Activated CD4-positive, alpha-beta T cell treated with anti-CD3 and anti-CD28 coated beads, Interleukin-2, amount 10 ng/mL, durations not matched to agents 24 days and 14 days (primary cell): ENCODE measurements at regions of chr9 and their contacts with region 1.

Region 1: GRCh38 chr9:69672596-69673310 is 582 bp upstream of the APBA1 start:
- DNase-seq: peak; percentile 92
- H3K4me3 Mint-ChIP-seq: peak overlapping the region; percentile 86
- H3K27ac Mint-ChIP-seq: peak overlapping the region; percentile 43
- H3K4me1 Mint-ChIP-seq: peaks cover 15% of the 10 kb centered on the region
- H3K27me3 Mint-ChIP-seq: peaks cover 43% of the 10 kb centered on the region

Region 2: GRCh38 chr9:69421908-69422801 is 250.6 kb before region 1 on chr9:
- intact Hi-C with region 1: loop called (anchors 5 kb)
- DNase-seq: peak; percentile 83
- H3K4me3 Mint-ChIP-seq: no peak overlapping the region
- H3K27ac Mint-ChIP-seq: no peak overlapping the region
- H3K4me1 Mint-ChIP-seq: peaks cover 2% of the 10 kb centered on the region
- H3K27me3 Mint-ChIP-seq: peaks cover 9% of the 10 kb centered on the region

Region 3: DNA sequence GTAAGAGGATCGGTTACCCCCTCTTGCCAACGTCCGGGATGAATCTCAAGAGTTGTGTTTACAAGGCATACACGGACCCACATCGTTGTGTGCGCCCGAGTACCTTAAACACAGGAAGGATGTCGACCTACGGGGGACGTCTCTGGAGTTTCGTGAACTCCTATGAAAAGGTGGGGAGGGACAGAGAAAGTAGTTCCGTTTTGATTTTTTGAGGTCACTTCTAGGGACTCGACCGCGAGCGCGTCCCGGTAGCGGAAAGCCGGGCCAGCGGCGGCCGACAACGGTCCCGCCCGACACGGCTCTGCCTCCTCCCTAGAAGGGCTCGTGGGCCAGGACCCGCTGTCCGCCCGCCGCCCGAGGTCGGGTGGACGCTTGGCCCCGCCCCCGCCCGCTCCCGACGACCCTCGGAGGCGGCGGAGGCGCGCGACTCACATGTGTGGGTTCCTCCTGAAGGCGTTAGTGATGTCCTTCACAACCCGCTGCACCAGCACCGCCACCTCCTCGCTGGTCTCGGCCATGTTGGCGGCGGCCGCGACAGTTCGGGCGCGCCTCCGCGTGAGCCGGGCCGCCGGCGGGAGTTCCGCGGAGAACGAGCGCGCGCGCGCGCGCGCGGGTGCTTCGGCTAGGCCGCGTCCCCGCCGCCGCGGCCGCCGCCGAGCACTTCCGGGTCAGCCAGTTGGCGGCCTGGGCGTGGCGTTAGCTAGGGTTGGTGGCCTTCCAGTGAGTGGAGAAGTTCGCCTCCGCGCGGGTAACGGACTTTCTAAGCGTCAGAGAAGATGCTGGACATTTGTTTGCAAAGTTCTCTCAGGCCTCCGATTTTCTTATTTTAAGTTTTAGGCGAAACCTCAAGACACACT is 86.9 kb after region 1 on chr9 and contains the start of gene PTAR1:
- intact Hi-C with region 1: loop called (anchors 1 kb)
- DNase-seq: peak; percentile 97
- H3K4me3 Mint-ChIP-seq: peak within 1 kb of the TSS; percentile 98
- H3K27ac Mint-ChIP-seq: peak within 1 kb of the TSS; percentile 96
- H3K4me1 Mint-ChIP-seq: peaks cover 29% of the 10 kb centered on the region
- H3K27me3 Mint-ChIP-seq: no peaks in the 10 kb centered on the region
- total RNA-seq, gene PTAR1: 51.0 and 56.1 TPM in 2 replicates

Region 4: GRCh38 chr9:69877854-69878514 is 205.2 kb after region 1 on chr9:
- intact Hi-C with region 1: loop called (anchors 1 kb)
- DNase-seq: no peak
- H3K4me3 Mint-ChIP-seq: no peak overlapping the region
- H3K27ac Mint-ChIP-seq: no peak overlapping the region
- H3K4me1 Mint-ChIP-seq: no peaks in the 10 kb centered on the region
- H3K27me3 Mint-ChIP-seq: peaks cover 18% of the 10 kb centered on the region

Region 5: DNA sequence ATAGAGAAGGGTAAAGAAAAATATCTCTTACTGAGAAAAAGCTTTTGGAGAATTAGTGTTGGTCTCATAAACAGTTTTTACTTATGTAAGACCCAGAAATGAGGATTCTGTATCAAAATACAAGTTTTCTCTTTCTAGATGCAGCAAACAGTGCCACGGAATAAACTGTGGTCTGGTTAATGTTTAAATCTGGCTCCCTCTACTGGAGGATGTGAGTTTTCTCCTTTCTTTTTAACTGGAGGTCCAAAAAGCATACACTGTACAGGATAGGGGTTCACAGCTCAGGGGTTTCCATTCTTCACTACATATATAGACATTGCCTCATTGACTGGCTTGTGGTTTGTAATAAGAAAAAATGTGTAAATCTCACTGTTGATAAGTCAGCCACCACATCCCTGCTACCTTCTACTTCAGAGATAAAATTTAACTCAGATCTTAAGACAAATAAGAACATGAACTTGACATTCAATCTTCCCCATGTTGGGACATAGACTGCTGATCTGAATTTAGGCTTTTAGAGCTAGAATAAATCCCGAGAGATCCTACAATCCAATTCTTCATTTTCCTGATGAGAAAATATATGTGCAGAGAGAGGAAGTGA is 246.8 kb after region 1 on chr9:
- intact Hi-C with region 1: loop called (anchors 2 kb)
- DNase-seq: peak; percentile 68
- H3K4me3 Mint-ChIP-seq: no peak overlapping the region
- H3K27ac Mint-ChIP-seq: no peak overlapping the region
- H3K4me1 Mint-ChIP-seq: no peaks in the 10 kb centered on the region
- H3K27me3 Mint-ChIP-seq: peaks cover 18% of the 10 kb centered on the region

Region 6: DNA sequence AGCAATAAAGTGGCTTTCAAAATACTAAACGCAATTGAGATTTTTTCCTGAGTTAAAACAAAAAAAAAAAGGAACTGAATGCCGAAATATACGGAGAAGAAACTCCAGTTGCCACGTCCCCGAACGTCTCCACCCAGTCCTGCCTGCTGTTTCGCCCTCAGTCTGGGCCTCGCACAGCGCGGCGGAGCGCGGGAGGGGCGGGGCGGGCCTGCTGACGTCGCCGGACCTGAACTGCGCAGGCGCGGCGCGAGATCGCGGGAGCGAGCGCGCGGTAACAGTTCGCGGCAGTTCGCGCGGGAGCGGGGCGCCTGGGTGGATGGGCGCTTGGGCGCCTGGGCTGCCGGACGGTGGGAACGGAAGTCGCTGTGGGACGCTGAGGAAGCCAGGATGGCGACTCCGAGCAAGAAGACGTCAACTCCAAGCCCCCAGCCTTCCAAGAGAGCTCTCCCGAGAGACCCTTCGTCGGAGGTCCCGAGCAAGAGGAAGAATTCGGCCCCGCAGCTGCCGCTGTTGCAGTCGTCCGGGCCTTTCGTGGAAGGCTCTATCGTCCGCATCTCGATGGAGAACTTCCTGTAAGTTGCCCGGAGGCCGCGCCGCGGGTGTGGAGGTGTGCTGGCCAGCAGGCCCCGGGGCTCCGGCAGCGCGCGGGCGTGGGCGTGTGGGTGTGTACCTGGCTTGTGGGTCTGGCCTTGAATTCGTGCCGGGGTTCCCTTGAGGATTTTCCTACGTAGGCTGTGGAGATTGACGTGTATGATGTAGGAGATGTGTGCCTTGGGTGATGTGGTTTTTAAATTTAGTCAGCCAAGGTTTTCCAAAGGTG is 586.1 kb after region 1 on chr9 and contains the start of gene SMC5:
- intact Hi-C with region 1: loop called (anchors 10 kb)
- DNase-seq: peak; percentile 98
- H3K4me3 Mint-ChIP-seq: peak within 1 kb of the TSS; percentile 91
- H3K27ac Mint-ChIP-seq: peak within 1 kb of the TSS; percentile 85
- H3K4me1 Mint-ChIP-seq: peaks cover 49% of the 10 kb centered on the region
- H3K27me3 Mint-ChIP-seq: peaks cover 11% of the 10 kb centered on the region
- total RNA-seq, gene SMC5: 47.0 and 50.7 TPM in 2 replicates

Region 7: GRCh38 chr9:70466976-70467561 is 794.3 kb after region 1 on chr9:
- intact Hi-C with region 1: loop called (anchors 5 kb)
- DNase-seq: no peak
- H3K4me3 Mint-ChIP-seq: peak overlapping the region; percentile 14
- H3K27ac Mint-ChIP-seq: peak overlapping the region; percentile 77
- H3K4me1 Mint-ChIP-seq: peaks cover 39% of the 10 kb centered on the region
- H3K27me3 Mint-ChIP-seq: no peaks in the 10 kb centered on the region